ENCODE measurements at regions of chr1 and their contacts with region 1.

Region 1: GRCh38 chr1:178768423-178768822 is 43.4 kb downstream of the RALGPS2 start:
- DNase-seq: no peak
- H3K4me3 ChIP-seq: no peak overlapping the region
- H3K27ac ChIP-seq: no peak overlapping the region
- H3K4me1 ChIP-seq: no peaks in the 10 kb centered on the region
- H3K27me3 ChIP-seq: no peaks in the 10 kb centered on the region
- CTCF ChIP-seq: peak in 1 of 2 experiments; percentile 47

Region 2: DNA sequence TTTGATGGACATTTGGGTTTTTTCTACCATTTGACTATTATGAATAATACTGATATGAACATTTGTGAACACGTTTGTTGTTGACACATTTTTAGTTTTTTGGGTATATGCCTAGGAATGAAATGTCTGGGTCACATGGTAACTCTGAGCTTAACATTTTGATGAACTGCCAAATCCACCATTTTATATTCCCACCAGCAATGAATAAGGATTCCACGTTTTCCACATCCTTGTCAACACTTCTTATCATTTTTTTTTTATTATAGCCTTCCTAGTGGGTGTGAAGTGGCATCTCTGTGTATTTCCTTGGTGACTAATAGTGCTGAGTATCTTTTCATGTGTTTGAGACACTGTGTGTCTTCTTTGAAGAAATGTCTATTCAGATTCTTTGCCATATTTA is 606.9 kb before region 1 on chr1:
- intact Hi-C with region 1: no loop called
- DNase-seq: no peak
- H3K4me3 ChIP-seq: no peak overlapping the region
- H3K27ac ChIP-seq: no peak overlapping the region
- H3K4me1 ChIP-seq: peaks cover 0 to 9% (median 0%) of the 10 kb centered on the region in 4 donors
- H3K27me3 ChIP-seq: no peaks in the 10 kb centered on the region
- CTCF ChIP-seq: no peak

Region 3: DNA sequence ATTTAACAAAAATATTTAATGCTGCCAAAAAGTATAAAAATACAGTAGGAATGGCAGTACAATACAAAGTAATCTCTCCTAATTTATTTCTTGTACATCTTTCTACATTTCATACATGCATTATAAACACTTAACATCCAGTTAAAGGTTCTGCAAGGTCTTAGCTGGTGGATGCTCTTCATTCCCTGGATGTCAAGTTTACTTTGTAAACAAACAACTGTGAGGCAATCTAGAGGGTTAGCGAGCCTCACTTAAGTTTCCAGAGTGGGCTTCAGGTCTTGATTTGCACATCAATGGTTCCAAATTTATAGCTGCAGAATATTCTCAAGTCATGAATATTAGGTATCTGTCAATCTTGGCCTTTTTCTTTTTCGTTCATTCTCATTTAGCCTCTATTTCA is 22.1 kb before region 1 on chr1:
- intact Hi-C with region 1: loop called (anchors 2 kb)
- DNase-seq: no peak
- H3K4me3 ChIP-seq: no peak overlapping the region
- H3K27ac ChIP-seq: no peak overlapping the region
- H3K4me1 ChIP-seq: no peaks in the 10 kb centered on the region
- H3K27me3 ChIP-seq: no peaks in the 10 kb centered on the region
- CTCF ChIP-seq: no peak